Right ventricle myocardium inferior (tissue), 1 donor: ENCODE measurements at regions of chr16 and their contacts with region 1.

Region 1: GRCh38 chr16:3857189-3858043 is 23.1 kb downstream of the CREBBP start:
- DNase-seq: no peak
- ATAC-seq: peak; percentile 80

Region 2: GRCh38 chr16:3754081-3754703 is 103.2 kb before region 1 on chr16:
- intact Hi-C with region 1: no loop called
- DNase-seq: no peak
- ATAC-seq: no peak

Region 3: GRCh38 chr16:3793161-3793576 is 64.2 kb before region 1 on chr16:
- intact Hi-C with region 1: no loop called
- DNase-seq: peak; percentile 45
- ATAC-seq: peak; percentile 75

Region 4: GRCh38 chr16:3819746-3820724 is 37.4 kb before region 1 on chr16:
- intact Hi-C with region 1: loop called (anchors 5 kb)
- DNase-seq: no peak
- ATAC-seq: peak; percentile 84